BJ (cell line): ENCODE measurements at regions of chr18 and their contacts with region 1.

Region 1: GRCh38 chr18:70431203-70431624 is 142.4 kb downstream of the SOCS6 start:
- DNase-seq: peak; percentile 39
- H3K4me3 ChIP-seq: no peak overlapping the region
- H3K27me3 ChIP-seq: no peaks in the 10 kb centered on the region
- CTCF ChIP-seq: no peak

Region 2: DNA sequence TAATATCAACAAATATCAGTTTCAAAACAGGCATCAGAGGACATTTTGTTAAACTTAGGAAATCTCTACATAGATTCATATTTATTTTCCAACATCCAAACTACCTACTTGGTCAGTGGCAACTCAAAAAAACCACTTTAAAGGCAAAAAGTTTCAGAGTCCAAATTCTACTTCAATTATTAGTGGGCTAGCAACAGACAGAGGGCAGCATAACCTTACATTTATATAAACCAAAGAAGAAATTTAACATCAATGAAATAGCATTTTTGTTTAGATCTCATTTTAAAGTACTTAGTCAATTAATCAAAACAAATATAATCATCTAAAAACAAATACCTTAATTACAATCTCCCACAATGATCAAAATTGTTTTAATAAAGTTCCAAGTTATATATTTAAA is 259.0 kb before region 1 on chr18:
- CTCF ChIA-PET with region 1: interaction called, 22 read pairs
- POLR2A ChIA-PET with region 1: no interaction called
- DNase-seq: no peak
- H3K4me3 ChIP-seq: no peak overlapping the region
- H3K27me3 ChIP-seq: no peaks in the 10 kb centered on the region
- CTCF ChIP-seq: peak; percentile 44

Region 3: GRCh38 chr18:70195852-70196434 is 235.3 kb before region 1 on chr18:
- CTCF ChIA-PET with region 1: interaction called, 154 read pairs
- POLR2A ChIA-PET with region 1: no interaction called
- DNase-seq: no peak
- H3K4me3 ChIP-seq: no peak overlapping the region
- H3K27me3 ChIP-seq: no peaks in the 10 kb centered on the region
- CTCF ChIP-seq: peak; percentile 81

Region 4: GRCh38 chr18:70205421-70206397 is 225.5 kb before region 1 on chr18 and contains the start of gene RTTN:
- CTCF ChIA-PET with region 1: interaction called, 10 read pairs
- POLR2A ChIA-PET with region 1: no interaction called
- DNase-seq: peak; percentile 69
- H3K4me3 ChIP-seq: peak within 1 kb of the TSS; percentile 90
- H3K27me3 ChIP-seq: no peaks in the 10 kb centered on the region
- CTCF ChIP-seq: no peak
- polyA plus RNA-seq, gene RTTN: 5.4 and 8.2 TPM in 2 replicates

Region 5: GRCh38 chr18:70411876-70412443 is 19.3 kb before region 1 on chr18:
- CTCF ChIA-PET with region 1: no interaction called
- POLR2A ChIA-PET with region 1: no interaction called
- DNase-seq: no peak
- H3K4me3 ChIP-seq: no peak overlapping the region
- H3K27me3 ChIP-seq: no peaks in the 10 kb centered on the region
- CTCF ChIP-seq: no peak

Region 6: GRCh38 chr18:70442933-70443332 is 11.7 kb after region 1 on chr18:
- CTCF ChIA-PET with region 1: interaction called, 11 read pairs
- POLR2A ChIA-PET with region 1: no interaction called
- DNase-seq: no peak
- H3K4me3 ChIP-seq: no peak overlapping the region
- H3K27me3 ChIP-seq: no peaks in the 10 kb centered on the region
- CTCF ChIP-seq: no peak

Region 7: GRCh38 chr18:70454704-70455322 is 23.6 kb after region 1 on chr18:
- CTCF ChIA-PET with region 1: interaction called, 23 read pairs
- POLR2A ChIA-PET with region 1: no interaction called
- DNase-seq: no peak
- H3K4me3 ChIP-seq: no peak overlapping the region
- H3K27me3 ChIP-seq: no peaks in the 10 kb centered on the region
- CTCF ChIP-seq: peak; percentile 77